HCT116 (cell line): ENCODE measurements at regions of chr2 and their contacts with region 1.

Region 1: GRCh38 chr2:197378494-197379307 is 56.1 kb downstream of the SF3B1 start:
- DNase-seq: peak; percentile 37
- ATAC-seq: peak; percentile 86
- H3K4me3 ChIP-seq: no peak overlapping the region
- H3K27ac ChIP-seq: no peak overlapping the region
- H3K4me1 ChIP-seq: no peaks in the 10 kb centered on the region
- H3K27me3 ChIP-seq: no peaks in the 10 kb centered on the region
- CTCF ChIP-seq: peak; percentile 64 to 93 (median 78)
- POLR2A ChIP-seq: no peak
- RAD21 ChIP-seq: peak; percentile 96

Region 2: GRCh38 chr2:196131384-196131937 is 1247.2 kb before region 1 on chr2:
- CTCF ChIA-PET with region 1: no interaction called
- POLR2A ChIA-PET with region 1: no interaction called
- RAD21 ChIA-PET with region 1: no interaction called
- intact Hi-C with region 1: loop called (anchors 10 kb)
- DNase-seq: peak; percentile 66
- ATAC-seq: peak; percentile 97
- H3K4me3 ChIP-seq: no peak overlapping the region
- H3K27ac ChIP-seq: no peak overlapping the region
- H3K4me1 ChIP-seq: no peaks in the 10 kb centered on the region; a peak in 1 of 4 replicates
- H3K27me3 ChIP-seq: no peaks in the 10 kb centered on the region
- CTCF ChIP-seq: peak; percentile 64 to 85 (median 84)
- POLR2A ChIP-seq: no peak
- RAD21 ChIP-seq: peak; percentile 98

Region 3: GRCh38 chr2:196849895-196850294 is 528.8 kb before region 1 on chr2:
- CTCF ChIA-PET with region 1: interaction called, 3 read pairs
- POLR2A ChIA-PET with region 1: no interaction called
- RAD21 ChIA-PET with region 1: no interaction called
- intact Hi-C with region 1: loop called (anchors 5 kb)
- DNase-seq: no peak
- ATAC-seq: peak; percentile 86
- H3K4me3 ChIP-seq: no peak overlapping the region
- H3K27ac ChIP-seq: no peak overlapping the region
- H3K4me1 ChIP-seq: no peaks in the 10 kb centered on the region
- H3K27me3 ChIP-seq: no peaks in the 10 kb centered on the region
- CTCF ChIP-seq: peak; percentile 27 to 36 (median 27); a peak in 2 of 6 replicates
- POLR2A ChIP-seq: no peak
- RAD21 ChIP-seq: peak; percentile 50

Region 4: DNA sequence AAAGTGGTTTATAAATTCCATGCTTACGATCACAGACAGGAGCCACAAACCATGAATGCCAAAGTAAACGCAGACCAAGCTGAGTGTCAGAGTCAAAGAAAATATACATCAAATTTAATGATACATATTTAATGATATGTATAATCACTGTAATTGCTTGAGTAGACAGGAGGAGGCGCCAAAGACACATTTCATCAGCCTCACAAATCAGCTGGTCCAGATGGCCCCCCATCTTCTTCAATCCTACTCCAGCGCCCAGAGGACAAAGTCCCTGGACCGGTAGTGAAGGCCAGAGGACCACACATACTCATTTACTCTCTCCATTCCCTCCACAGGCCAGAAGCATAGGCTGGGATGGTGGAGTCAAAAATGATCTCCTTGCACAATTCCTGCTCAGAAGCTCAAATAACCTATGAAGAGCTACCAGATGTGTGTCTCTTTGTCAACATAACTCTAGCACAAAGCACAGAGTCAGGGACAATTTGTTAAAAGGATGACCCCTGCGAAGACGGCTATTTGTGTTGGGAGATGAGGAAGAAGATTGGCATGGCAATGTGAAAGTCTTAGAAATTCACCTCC is 302.9 kb before region 1 on chr2:
- CTCF ChIA-PET with region 1: no interaction called
- POLR2A ChIA-PET with region 1: no interaction called
- RAD21 ChIA-PET with region 1: no interaction called
- intact Hi-C with region 1: loop called (anchors 1 kb)
- DNase-seq: no peak
- ATAC-seq: 0 out of 2 replicates have a peak, but pooled peaks have one; percentile 46
- H3K4me3 ChIP-seq: no peak overlapping the region
- H3K27ac ChIP-seq: no peak overlapping the region
- H3K4me1 ChIP-seq: peaks cover 2 to 3% of the 10 kb centered on the region in 2 experiments; a peak in 2 of 4 replicates
- H3K27me3 ChIP-seq: no peaks in the 10 kb centered on the region
- CTCF ChIP-seq: peak; percentile 39 to 60 (median 52); a peak in 5 of 6 replicates
- POLR2A ChIP-seq: no peak
- RAD21 ChIP-seq: peak; percentile 58

Region 5: DNA sequence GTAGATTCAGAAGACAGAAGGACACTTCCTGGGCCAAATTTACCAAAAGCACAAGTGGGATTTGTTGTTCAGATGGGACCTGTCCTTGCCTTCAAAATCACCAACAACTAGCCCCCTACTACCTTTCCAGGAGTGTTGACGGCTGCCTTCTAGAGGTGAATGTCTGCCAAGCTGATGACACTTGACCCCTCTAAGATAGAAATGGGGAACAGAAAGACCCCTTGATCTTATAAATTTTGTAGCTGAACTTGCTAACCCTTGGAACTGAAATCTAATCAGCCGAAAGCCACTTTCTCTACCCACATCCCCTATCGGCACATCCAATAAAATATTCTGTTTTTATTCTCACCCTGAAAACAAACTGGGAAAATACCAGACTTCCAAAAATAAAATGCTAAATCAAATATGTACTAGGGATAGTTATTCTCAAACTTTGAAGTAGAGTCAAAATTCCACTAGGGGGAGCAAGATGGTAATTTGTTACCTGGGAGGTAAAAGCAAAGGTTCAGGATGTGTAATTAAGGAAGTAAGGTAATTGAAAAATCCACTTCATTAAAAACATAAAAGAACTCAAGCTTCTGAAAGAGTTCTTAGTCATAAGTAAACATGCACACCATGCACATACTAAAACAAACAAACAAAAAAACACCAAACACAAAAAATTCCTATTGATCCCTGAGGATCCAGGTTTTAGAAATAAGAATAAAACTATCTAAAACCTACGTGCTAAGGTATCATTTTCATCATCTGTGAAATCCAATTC is 187.3 kb before region 1 on chr2:
- CTCF ChIA-PET with region 1: no interaction called
- POLR2A ChIA-PET with region 1: no interaction called
- RAD21 ChIA-PET with region 1: no interaction called
- intact Hi-C with region 1: loop called (anchors 1 kb)
- DNase-seq: peak; percentile 31
- ATAC-seq: peak; percentile 68
- H3K4me3 ChIP-seq: no peak overlapping the region
- H3K27ac ChIP-seq: no peak overlapping the region
- H3K4me1 ChIP-seq: no peaks in the 10 kb centered on the region
- H3K27me3 ChIP-seq: no peaks in the 10 kb centered on the region
- CTCF ChIP-seq: peak; percentile 61 to 83 (median 78)
- POLR2A ChIP-seq: no peak
- RAD21 ChIP-seq: peak; percentile 86